ENCODE measurements at regions of chr1 and their contacts with region 1.

Region 1: GRCh38 chr1:35557292-35558063 is at the starts of genes KIAA0319L and NCDN:
- DNase-seq: peak; percentile 90 to 97 (median 95)
- ATAC-seq: peak; percentile 87
- H3K4me3 ChIP-seq: peak within 1 kb of the TSS; percentile 83 to 99
- H3K4me3 Mint-ChIP-seq: peak within 1 kb of the TSS; percentile 97
- H3K27ac ChIP-seq: peak within 1 kb of the TSS; percentile 63 to 83
- H3K27ac Mint-ChIP-seq: peak within 1 kb of the TSS; percentile 97
- H3K4me1 ChIP-seq: peaks cover 25% of the 10 kb centered on the region
- H3K4me1 Mint-ChIP-seq: peaks cover 61% of the 10 kb centered on the region
- H3K27me3 ChIP-seq: no peaks in the 10 kb centered on the region
- H3K27me3 Mint-ChIP-seq: no peaks in the 10 kb centered on the region
- CTCF ChIP-seq: no peak
- total RNA-seq, gene KIAA0319L: 37.0 to 39.8 TPM
- total RNA-seq, gene NCDN: 9.1 to 10.3 TPM

Region 2: GRCh38 chr1:35030756-35031446 is 526.6 kb before region 1 on chr1:
- CTCF ChIA-PET with region 1: no interaction called
- POLR2A ChIA-PET with region 1: no interaction called
- intact Hi-C with region 1: loop called in 1 of 2 experiments (anchors 5 kb)
- DNase-seq: peak in 8 of 9 experiments; percentile 26 to 65 (median 56)
- ATAC-seq: peak; percentile 59
- H3K4me3 ChIP-seq: peak overlapping the region; percentile 92 to 97
- H3K4me3 Mint-ChIP-seq: peak overlapping the region; percentile 99
- H3K27ac ChIP-seq: peak overlapping the region; percentile 62 to 85
- H3K27ac Mint-ChIP-seq: peak overlapping the region; percentile 98
- H3K4me1 ChIP-seq: peaks cover 25% of the 10 kb centered on the region
- H3K4me1 Mint-ChIP-seq: peaks cover 49% of the 10 kb centered on the region
- H3K27me3 ChIP-seq: no peaks in the 10 kb centered on the region
- H3K27me3 Mint-ChIP-seq: no peaks in the 10 kb centered on the region
- CTCF ChIP-seq: no peak

Region 3: GRCh38 chr1:35287807-35288640 is 269.5 kb before region 1 on chr1:
- CTCF ChIA-PET with region 1: no interaction called
- POLR2A ChIA-PET with region 1: no interaction called
- intact Hi-C with region 1: no loop called
- DNase-seq: no peak
- ATAC-seq: no peak
- H3K4me3 ChIP-seq: no peak overlapping the region
- H3K4me3 Mint-ChIP-seq: no peak overlapping the region
- H3K27ac ChIP-seq: no peak overlapping the region
- H3K27ac Mint-ChIP-seq: no peak overlapping the region
- H3K4me1 ChIP-seq: peaks cover 14% of the 10 kb centered on the region
- H3K4me1 Mint-ChIP-seq: peaks cover 47% of the 10 kb centered on the region
- H3K27me3 ChIP-seq: no peaks in the 10 kb centered on the region
- H3K27me3 Mint-ChIP-seq: no peaks in the 10 kb centered on the region
- CTCF ChIP-seq: no peak

Region 4: DNA sequence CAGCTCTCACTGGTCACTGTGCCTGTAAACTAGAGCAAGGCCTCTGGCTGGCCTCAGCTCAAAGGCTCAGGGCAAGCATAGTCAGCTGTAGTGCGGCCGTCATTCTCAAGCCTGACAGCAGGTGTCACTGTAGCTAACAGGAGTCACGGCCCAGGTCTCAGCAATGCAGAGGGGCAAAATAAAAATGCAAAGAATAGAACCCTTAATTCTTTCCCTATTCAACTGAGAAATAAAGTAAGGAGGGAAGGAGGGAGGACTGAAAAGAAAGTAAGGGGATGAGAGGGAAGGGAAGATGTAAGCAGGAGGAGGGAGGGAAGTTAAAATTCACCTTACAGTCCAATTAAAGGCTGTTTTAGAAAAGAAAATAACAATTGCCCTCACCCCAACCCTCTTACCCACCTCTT is 106.4 kb before region 1 on chr1:
- CTCF ChIA-PET with region 1: interaction called, 80 read pairs
- POLR2A ChIA-PET with region 1: interaction called, 11 read pairs
- intact Hi-C with region 1: no loop called
- DNase-seq: peak; percentile 62 to 85 (median 79)
- ATAC-seq: peak; percentile 94
- H3K4me3 ChIP-seq: no peak overlapping the region
- H3K4me3 Mint-ChIP-seq: no peak overlapping the region
- H3K27ac ChIP-seq: no peak overlapping the region
- H3K27ac Mint-ChIP-seq: peak overlapping the region; percentile 85
- H3K4me1 ChIP-seq: peaks cover 14% of the 10 kb centered on the region
- H3K4me1 Mint-ChIP-seq: peaks cover 27% of the 10 kb centered on the region
- H3K27me3 ChIP-seq: no peaks in the 10 kb centered on the region
- H3K27me3 Mint-ChIP-seq: no peaks in the 10 kb centered on the region
- CTCF ChIP-seq: peak; percentile 82

Region 5: GRCh38 chr1:35544978-35545377 is 12.5 kb before region 1 on chr1:
- CTCF ChIA-PET with region 1: interaction called, 12 read pairs
- POLR2A ChIA-PET with region 1: interaction called, 11 read pairs
- intact Hi-C with region 1: no loop called
- DNase-seq: peak in 7 of 9 experiments; percentile 37 to 83 (median 70)
- ATAC-seq: peak; percentile 88
- H3K4me3 ChIP-seq: no peak overlapping the region
- H3K4me3 Mint-ChIP-seq: no peak overlapping the region
- H3K27ac ChIP-seq: no peak overlapping the region
- H3K27ac Mint-ChIP-seq: peak overlapping the region; percentile 20
- H3K4me1 ChIP-seq: peaks cover 35% of the 10 kb centered on the region
- H3K4me1 Mint-ChIP-seq: peaks cover 77% of the 10 kb centered on the region
- H3K27me3 ChIP-seq: no peaks in the 10 kb centered on the region
- H3K27me3 Mint-ChIP-seq: no peaks in the 10 kb centered on the region
- CTCF ChIP-seq: peak; percentile 57

Region 6: GRCh38 chr1:35769759-35770446 is 212.4 kb after region 1 on chr1 and contains the start of gene CLSPN:
- CTCF ChIA-PET with region 1: interaction called, 8 read pairs
- POLR2A ChIA-PET with region 1: no interaction called
- intact Hi-C with region 1: loop called (anchors 1 to 2 kb)
- DNase-seq: peak; percentile 86 to 96 (median 93)
- ATAC-seq: peak; percentile 94
- H3K4me3 ChIP-seq: peak within 1 kb of the TSS; percentile 90 to 97
- H3K4me3 Mint-ChIP-seq: peak within 1 kb of the TSS; percentile 99
- H3K27ac ChIP-seq: peak within 1 kb of the TSS; percentile 61 to 81
- H3K27ac Mint-ChIP-seq: peak within 1 kb of the TSS; percentile 92
- H3K4me1 ChIP-seq: peaks cover 5% of the 10 kb centered on the region
- H3K4me1 Mint-ChIP-seq: peaks cover 8% of the 10 kb centered on the region
- H3K27me3 ChIP-seq: no peaks in the 10 kb centered on the region
- H3K27me3 Mint-ChIP-seq: no peaks in the 10 kb centered on the region
- CTCF ChIP-seq: no peak
- total RNA-seq, gene CLSPN: 0.41 to 0.81 TPM

Region 7: DNA sequence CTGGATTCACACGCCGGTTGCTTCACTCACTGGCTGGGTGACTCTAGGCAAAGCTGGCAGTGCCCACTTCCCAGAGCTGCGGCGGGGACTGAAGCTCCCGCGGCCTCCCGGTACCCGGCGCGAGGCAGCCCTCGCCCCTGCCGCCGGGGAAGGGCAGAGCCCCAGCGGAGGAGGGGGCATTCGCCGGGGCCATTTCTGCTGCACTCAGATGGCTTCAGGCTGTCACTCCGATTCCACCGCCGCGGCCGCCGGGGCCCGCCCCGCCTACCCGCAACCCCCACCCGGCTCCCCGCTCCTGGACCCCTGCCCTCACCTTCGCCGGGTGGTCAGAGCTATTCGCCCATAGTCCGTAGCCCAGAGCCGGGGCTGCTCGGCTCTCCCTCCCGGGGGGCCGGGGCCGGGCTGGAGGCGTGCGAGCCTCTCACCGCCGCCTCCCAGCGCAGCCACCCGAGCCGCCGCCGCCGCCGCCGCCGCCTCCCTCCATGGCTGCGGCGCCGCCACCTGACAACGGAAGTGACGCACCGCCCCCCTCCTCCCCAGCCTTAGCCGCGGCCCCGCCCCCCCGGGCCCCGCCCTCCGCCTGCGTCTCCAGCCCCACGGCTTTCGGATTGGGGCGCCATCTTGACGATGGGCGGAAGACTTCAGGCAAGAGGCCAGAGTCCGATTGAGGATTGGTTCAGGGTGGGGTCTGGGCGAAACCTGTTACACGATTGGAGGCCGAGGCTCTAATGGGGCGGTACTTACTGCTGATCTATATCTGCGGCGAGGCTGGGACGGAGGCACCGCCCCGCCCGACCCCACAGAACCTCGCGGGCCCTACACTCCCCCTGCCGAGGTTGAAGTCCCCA is 828.2 kb after region 1 on chr1 and contains the start of gene STK40:
- CTCF ChIA-PET with region 1: no interaction called
- POLR2A ChIA-PET with region 1: no interaction called
- intact Hi-C with region 1: loop called in 1 of 2 experiments (anchors 5 kb)
- DNase-seq: peak; percentile 97 to 99 (median 98)
- ATAC-seq: peak; percentile 85
- H3K4me3 ChIP-seq: peak within 1 kb of the TSS; percentile 87 to 89
- H3K4me3 Mint-ChIP-seq: peak within 1 kb of the TSS; percentile 88
- H3K27ac ChIP-seq: peak within 1 kb of the TSS; percentile 78 to 92
- H3K27ac Mint-ChIP-seq: peak within 1 kb of the TSS; percentile 98
- H3K4me1 ChIP-seq: peaks cover 27% of the 10 kb centered on the region
- H3K4me1 Mint-ChIP-seq: peaks cover 46% of the 10 kb centered on the region
- H3K27me3 ChIP-seq: no peaks in the 10 kb centered on the region
- H3K27me3 Mint-ChIP-seq: no peaks in the 10 kb centered on the region
- CTCF ChIP-seq: no peak
- total RNA-seq, gene STK40: 13.4 to 16.9 TPM

Measured in CD8-positive, alpha-beta T cell (primary cell).